HepG2 (cell line): ENCODE measurements at regions of chr17 and their contacts with region 1.

Region 1: GRCh38 chr17:69523244-69523861 is 108.9 kb downstream of the MAP2K6 start:
- DNase-seq: peak; percentile 58
- ATAC-seq: peak; percentile 87
- H3K4me3 ChIP-seq: no peak overlapping the region
- H3K27ac ChIP-seq: no peak overlapping the region
- H3K4me1 ChIP-seq: no peaks in the 10 kb centered on the region
- H3K27me3 ChIP-seq: no peaks in the 10 kb centered on the region
- CTCF ChIP-seq: peak; percentile 81
- EP300 ChIP-seq: no peak
- POLR2A ChIP-seq: no peak
- RAD21 ChIP-seq: peak; percentile 66; the same call in 1 of the 2 replicates

Region 2: GRCh38 chr17:69335058-69335457 is 188.3 kb before region 1 on chr17:
- CTCF ChIA-PET with region 1: interaction called, 5 read pairs
- POLR2A ChIA-PET with region 1: no interaction called
- in situ Hi-C with region 1: loop called (anchors 5 kb)
- intact Hi-C with region 1: loop called (anchors 1 kb)
- DNase-seq: peak; percentile 46
- ATAC-seq: no peak
- H3K4me3 ChIP-seq: no peak overlapping the region
- H3K27ac ChIP-seq: no peak overlapping the region
- H3K4me1 ChIP-seq: no peaks in the 10 kb centered on the region
- H3K27me3 ChIP-seq: peaks cover 0 to 6% of the 10 kb centered on the region in 2 experiments; a peak in 1 of 5 replicates
- CTCF ChIP-seq: peak; percentile 53
- EP300 ChIP-seq: no peak
- POLR2A ChIP-seq: no peak
- RAD21 ChIP-seq: no peak

Region 3: DNA sequence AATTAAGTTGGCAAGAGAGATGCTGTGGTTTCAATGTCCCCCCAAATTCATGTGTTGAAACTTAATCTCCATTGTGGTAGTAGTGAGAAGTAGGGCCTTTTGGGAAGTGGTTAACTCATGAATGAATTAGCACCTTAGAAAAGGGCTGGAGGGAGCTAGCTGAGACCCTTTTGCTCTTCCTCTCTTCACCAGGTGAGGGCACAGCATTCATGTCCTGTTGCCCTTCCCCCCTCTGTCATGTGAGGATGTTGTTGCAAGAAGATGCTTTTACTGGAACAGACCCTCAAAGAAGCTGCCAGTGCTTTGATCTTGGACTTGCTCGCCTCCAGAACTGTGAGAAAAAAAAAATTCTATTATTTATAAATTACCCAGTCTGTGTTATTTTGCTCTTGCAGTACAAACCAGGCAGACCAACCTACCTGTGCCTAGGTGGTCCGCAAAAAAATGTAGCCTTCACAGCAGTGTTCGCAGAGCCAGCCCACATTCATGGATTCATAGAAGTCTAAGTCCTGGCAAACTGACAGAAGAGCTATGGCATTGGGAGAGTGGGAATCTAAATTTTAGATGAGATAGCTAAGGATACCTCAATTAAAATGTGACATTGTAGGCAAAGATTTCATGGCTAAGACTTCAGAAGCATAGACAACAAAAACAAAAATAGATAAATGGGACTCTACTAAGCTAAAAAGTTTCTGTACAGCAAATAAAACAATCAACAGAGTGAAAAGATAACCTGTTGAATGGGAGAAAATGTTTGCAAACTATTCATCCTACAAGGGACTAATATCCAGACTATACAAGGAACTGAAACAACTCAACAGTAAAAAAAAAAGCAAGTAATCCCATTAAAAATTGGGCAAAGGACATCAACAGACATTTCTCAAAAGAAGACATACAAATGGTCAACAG is 164.4 kb before region 1 on chr17:
- CTCF ChIA-PET with region 1: interaction called, 6 read pairs
- POLR2A ChIA-PET with region 1: no interaction called
- in situ Hi-C with region 1: no loop called
- intact Hi-C with region 1: loop called (anchors 1 kb)
- DNase-seq: peak; percentile 44
- ATAC-seq: peak; percentile 86
- H3K4me3 ChIP-seq: no peak overlapping the region
- H3K27ac ChIP-seq: no peak overlapping the region
- H3K4me1 ChIP-seq: no peaks in the 10 kb centered on the region
- H3K27me3 ChIP-seq: no peaks in the 10 kb centered on the region
- CTCF ChIP-seq: peak; percentile 70
- EP300 ChIP-seq: no peak
- POLR2A ChIP-seq: no peak
- RAD21 ChIP-seq: no peak

Region 4: GRCh38 chr17:69414408-69415274 is 108.7 kb before region 1 on chr17 and contains the start of gene MAP2K6:
- CTCF ChIA-PET with region 1: no interaction called
- POLR2A ChIA-PET with region 1: no interaction called
- in situ Hi-C with region 1: no loop called
- intact Hi-C with region 1: loop called (anchors 5 kb)
- DNase-seq: peak; percentile 77
- ATAC-seq: peak; percentile 99
- H3K4me3 ChIP-seq: peak within 1 kb of the TSS; percentile 67 to 73 (median 72)
- H3K27ac ChIP-seq: peak within 1 kb of the TSS; percentile 55
- H3K4me1 ChIP-seq: peaks cover 28% of the 10 kb centered on the region
- H3K27me3 ChIP-seq: no peaks in the 10 kb centered on the region; a peak in 1 of 5 replicates
- CTCF ChIP-seq: no peak
- EP300 ChIP-seq: peak; percentile 20 to 23; a peak in 3 of 4 replicates
- POLR2A ChIP-seq: peak; percentile 52 to 60; a peak in 2 of 4 replicates
- RAD21 ChIP-seq: no peak
- total RNA-seq, gene MAP2K6: 33.6 and 48.4 TPM in 2 replicates

Region 5: GRCh38 chr17:70144260-70144846 is 621.0 kb after region 1 on chr17:
- CTCF ChIA-PET with region 1: interaction called, 14 read pairs
- POLR2A ChIA-PET with region 1: no interaction called
- in situ Hi-C with region 1: no loop called
- intact Hi-C with region 1: loop called (anchors 1 kb)
- DNase-seq: peak; percentile 15
- ATAC-seq: no peak
- H3K4me3 ChIP-seq: no peak overlapping the region
- H3K27ac ChIP-seq: no peak overlapping the region
- H3K4me1 ChIP-seq: no peaks in the 10 kb centered on the region
- H3K27me3 ChIP-seq: no peaks in the 10 kb centered on the region; a peak in 1 of 5 replicates
- CTCF ChIP-seq: peak; percentile 64
- EP300 ChIP-seq: no peak
- POLR2A ChIP-seq: no peak
- RAD21 ChIP-seq: no peak

Region 6: DNA sequence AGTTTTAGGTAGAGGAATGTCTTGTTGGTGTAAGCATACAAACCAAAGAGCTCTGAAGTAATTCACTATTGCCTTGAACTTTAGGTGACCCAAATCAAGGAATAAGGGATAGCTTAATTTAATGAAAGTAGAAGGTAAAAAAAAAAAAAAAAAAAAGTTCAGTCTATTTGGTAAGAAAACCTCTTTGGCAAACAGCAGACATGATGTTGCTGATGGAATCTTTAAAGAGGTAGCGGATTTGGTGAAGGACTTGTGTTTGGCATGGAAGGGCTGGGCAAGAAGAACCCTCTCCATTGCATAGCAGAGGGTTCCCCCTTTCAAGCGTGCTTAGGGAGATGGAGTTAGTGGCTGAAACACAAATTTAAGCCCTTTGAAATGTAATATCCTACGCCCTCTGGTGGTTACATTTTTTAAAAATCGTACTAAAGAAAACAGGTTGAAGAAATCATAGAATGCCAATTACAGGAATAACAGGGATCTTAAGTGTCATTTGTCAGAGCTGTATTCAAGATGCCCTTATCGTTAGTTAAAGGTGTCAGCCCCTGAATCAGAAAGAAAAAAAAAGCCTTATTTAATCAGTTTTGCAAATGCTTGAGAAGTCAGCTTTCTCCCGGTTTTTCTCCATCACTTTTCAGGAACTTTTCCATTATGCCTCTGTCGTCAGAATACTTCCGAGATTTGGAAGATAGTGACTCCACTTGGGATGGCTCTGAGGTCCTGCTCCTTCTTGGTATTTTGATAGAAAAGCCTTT is 1029.1 kb after region 1 on chr17:
- CTCF ChIA-PET with region 1: interaction called, 3 read pairs
- POLR2A ChIA-PET with region 1: no interaction called
- in situ Hi-C with region 1: no loop called
- intact Hi-C with region 1: loop called (anchors 5 kb)
- DNase-seq: peak; percentile 15
- ATAC-seq: peak; percentile 41; the same call in 1 of the 3 replicates
- H3K4me3 ChIP-seq: no peak overlapping the region
- H3K27ac ChIP-seq: no peak overlapping the region
- H3K4me1 ChIP-seq: no peaks in the 10 kb centered on the region
- H3K27me3 ChIP-seq: no peaks in the 10 kb centered on the region
- CTCF ChIP-seq: peak; percentile 56
- EP300 ChIP-seq: no peak
- POLR2A ChIP-seq: no peak
- RAD21 ChIP-seq: no peak; the same call in 1 of the 2 replicates